ENCODE measurements at regions of chr12 and their contacts with region 1.

Region 1: DNA sequence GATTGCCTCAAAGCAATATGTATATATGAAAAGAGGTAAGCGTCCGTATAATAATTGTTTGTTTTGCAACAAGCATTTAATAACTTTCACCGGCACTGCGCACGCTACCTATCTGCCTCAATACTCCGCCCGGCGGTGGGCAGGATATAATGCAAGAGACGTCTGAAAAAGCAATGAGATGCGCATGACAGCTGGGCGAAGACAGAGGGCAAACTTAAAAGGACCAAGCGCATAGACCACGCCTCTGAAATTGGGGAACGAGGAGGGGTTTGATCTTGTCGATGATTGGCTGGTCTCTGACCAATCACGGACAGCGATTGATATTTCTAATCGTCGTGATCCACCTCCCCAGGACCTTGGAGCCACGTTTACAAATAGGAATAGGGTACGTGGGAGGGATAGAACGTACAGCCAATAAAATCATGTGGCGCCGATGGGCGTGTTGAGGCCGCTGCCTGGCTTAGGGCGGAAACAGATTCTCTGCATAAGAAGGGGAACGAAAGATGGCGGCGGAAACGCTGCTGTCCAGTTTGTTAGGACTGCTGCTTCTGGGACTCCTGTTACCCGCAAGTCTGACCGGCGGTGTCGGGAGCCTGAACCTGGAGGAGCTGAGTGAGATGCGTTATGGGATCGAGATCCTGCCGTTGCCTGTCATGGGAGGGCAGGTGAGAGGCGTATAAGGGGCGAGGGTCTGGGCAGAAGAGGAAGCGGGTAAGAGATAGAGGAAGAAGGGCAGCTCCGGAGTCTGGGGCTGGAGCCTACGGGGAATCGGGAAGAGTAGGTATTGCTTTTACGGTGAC is at the start of gene OS9:
- DNase-seq: peak; percentile 88 to 100
- ATAC-seq: peak; percentile 91 to 98 (median 92)
- H3K4me3 ChIP-seq: peak within 1 kb of the TSS; percentile 82
- H3K4me3 Mint-ChIP-seq: no peak within 1 kb of the TSS
- H3K27ac ChIP-seq: peak within 1 kb of the TSS; percentile 57
- H3K27ac Mint-ChIP-seq: no peak within 1 kb of the TSS
- H3K4me1 ChIP-seq: peaks cover 14% of the 10 kb centered on the region
- H3K4me1 Mint-ChIP-seq: peaks cover 2 to 8% of the 10 kb centered on the region in 2 donors
- H3K27me3 ChIP-seq: no peaks in the 10 kb centered on the region
- H3K27me3 Mint-ChIP-seq: peaks cover 3 to 15% of the 10 kb centered on the region in 2 donors
- CTCF ChIP-seq: peak; percentile 85
- total RNA-seq, gene OS9: 185 to 221 (median 198) TPM

Region 2: GRCh38 chr12:57520053-57520871 is 173.6 kb before region 1 on chr12 and contains the start of gene DDIT3:
- intact Hi-C with region 1: loop called (anchors 5 kb)
- DNase-seq: peak; percentile 99 to 100
- ATAC-seq: peak; percentile 71 to 91 (median 78)
- H3K4me3 ChIP-seq: peak within 1 kb of the TSS; percentile 99
- H3K4me3 Mint-ChIP-seq: peak within 1 kb of the TSS; percentile 97
- H3K27ac ChIP-seq: peak within 1 kb of the TSS; percentile 99
- H3K27ac Mint-ChIP-seq: peak within 1 kb of the TSS; percentile 99
- H3K4me1 ChIP-seq: peaks cover 61% of the 10 kb centered on the region
- H3K4me1 Mint-ChIP-seq: peaks cover 36 to 79% of the 10 kb centered on the region in 2 donors
- H3K27me3 ChIP-seq: no peaks in the 10 kb centered on the region
- H3K27me3 Mint-ChIP-seq: no peaks in the 10 kb centered on the region
- CTCF ChIP-seq: no peak
- total RNA-seq, gene DDIT3: 117 to 318 (median 182) TPM

Region 3: DNA sequence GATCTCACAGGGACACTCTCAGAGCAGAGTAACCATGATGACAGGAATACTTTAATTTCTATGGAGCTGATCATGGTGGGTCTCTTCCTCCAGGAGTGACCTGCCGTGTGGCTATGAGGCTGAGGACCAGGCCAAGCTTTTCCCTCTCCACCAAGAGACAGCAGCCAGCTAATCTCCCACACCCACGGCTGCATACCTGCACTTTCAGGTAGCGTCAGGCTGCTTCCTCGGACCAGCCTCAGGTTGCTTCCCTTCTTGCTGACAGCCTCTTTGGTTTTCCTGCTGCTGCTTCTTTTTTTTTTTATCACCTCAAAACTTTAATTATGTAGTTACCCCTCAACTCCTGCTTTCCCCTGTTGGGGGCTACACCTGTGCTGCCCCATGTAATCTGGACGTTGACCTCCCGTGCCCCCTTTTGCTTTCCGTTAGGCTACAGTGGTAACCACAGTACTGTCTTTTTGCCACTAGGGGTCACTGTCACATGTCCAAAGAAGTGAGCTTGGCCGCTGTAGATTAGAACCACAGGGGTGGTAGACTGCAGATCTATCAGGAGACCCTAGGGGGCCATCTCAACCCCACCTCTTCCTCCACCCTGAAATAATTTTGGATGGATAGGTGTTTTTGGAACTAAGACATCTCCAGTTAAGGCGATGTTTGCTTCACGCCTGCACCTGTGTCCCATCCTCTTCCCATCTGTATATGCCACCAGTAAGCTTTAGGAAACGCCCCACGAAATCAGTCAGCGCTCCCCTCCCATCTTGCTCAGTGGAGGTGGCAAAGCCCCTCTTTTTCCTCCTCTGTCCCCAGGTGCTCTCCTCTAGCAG is 110.6 kb before region 1 on chr12:
- intact Hi-C with region 1: loop called (anchors 2 kb)
- DNase-seq: peak; percentile 45 to 90
- ATAC-seq: peak; percentile 99 to 100 (median 100)
- H3K4me3 ChIP-seq: no peak overlapping the region
- H3K4me3 Mint-ChIP-seq: no peak overlapping the region
- H3K27ac ChIP-seq: no peak overlapping the region
- H3K27ac Mint-ChIP-seq: peak overlapping the region in 1 of 2 donors; percentile 24
- H3K4me1 ChIP-seq: no peaks in the 10 kb centered on the region
- H3K4me1 Mint-ChIP-seq: peaks cover 8 to 9% of the 10 kb centered on the region in 2 donors
- H3K27me3 ChIP-seq: peaks cover 2% of the 10 kb centered on the region
- H3K27me3 Mint-ChIP-seq: peaks cover 13 to 20% of the 10 kb centered on the region in 2 donors
- CTCF ChIP-seq: peak; percentile 90

Region 4: GRCh38 chr12:57744777-57745484 is 51.1 kb after region 1 on chr12 and contains the start of gene TSPAN31:
- intact Hi-C with region 1: loop called (anchors 1 kb)
- DNase-seq: peak; percentile 91 to 99
- ATAC-seq: peak; percentile 79 to 90 (median 84)
- H3K4me3 ChIP-seq: peak within 1 kb of the TSS; percentile 81
- H3K4me3 Mint-ChIP-seq: peak within 1 kb of the TSS; percentile 98
- H3K27ac ChIP-seq: peak within 1 kb of the TSS; percentile 91
- H3K27ac Mint-ChIP-seq: peak within 1 kb of the TSS; percentile 98 to 99
- H3K4me1 ChIP-seq: peaks cover 44% of the 10 kb centered on the region
- H3K4me1 Mint-ChIP-seq: peaks cover 47 to 49% of the 10 kb centered on the region in 2 donors
- H3K27me3 ChIP-seq: no peaks in the 10 kb centered on the region
- H3K27me3 Mint-ChIP-seq: no peaks in the 10 kb centered on the region
- CTCF ChIP-seq: no peak
- total RNA-seq, gene TSPAN31: 18.3 to 27.0 (median 23.5) TPM